Activated CD8-positive, alpha-beta memory T cell treated with anti-CD3 and anti-CD28 coated beads, Interleukin-2, amount 10 ng/mL, durations not matched to agents 7 days and 5 days (primary cell): ENCODE measurements at regions of chr17 and their contacts with region 1.

Region 1: GRCh38 chr17:1365445-1366039 is 34.5 kb downstream of the YWHAE start:
- DNase-seq: peak; percentile 71
- ATAC-seq: peak; percentile 56
- H3K4me3 Mint-ChIP-seq: no peak overlapping the region
- H3K27ac Mint-ChIP-seq: no peak overlapping the region
- H3K4me1 Mint-ChIP-seq: peaks cover 68% of the 10 kb centered on the region
- H3K27me3 Mint-ChIP-seq: no peaks in the 10 kb centered on the region

Region 2: DNA sequence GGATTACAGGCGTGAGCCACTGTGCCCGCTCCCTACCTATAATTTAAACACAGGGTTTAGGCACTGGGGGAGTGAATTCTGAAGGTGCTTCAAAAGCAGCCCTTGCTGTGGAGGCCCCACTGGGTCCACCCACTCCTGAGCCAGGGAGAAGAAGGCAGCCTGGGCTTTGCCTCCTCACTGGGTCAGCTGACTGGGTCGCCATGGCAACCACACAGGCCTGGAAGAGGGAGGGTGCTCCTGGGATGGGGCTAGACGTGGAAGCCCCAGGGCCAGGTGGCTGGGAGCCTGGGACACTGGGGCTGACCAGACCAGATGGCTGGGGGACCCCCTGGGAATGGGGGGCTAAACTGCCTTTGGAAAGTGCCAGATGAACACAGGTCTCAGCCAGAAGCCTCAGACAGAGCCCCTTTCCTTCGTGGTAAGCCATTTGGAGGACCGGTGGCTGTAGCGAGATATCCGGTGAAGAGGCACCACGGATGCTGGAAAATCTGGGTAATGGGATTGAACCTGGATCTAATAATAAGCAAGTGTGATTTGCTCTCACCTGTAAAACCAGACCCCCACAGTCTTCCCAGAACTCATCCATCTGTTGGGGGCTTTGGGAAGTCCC is 53.2 kb before region 1 on chr17:
- CTCF ChIA-PET with region 1: no interaction called
- DNase-seq: no peak
- ATAC-seq: peak; percentile 45
- H3K4me3 Mint-ChIP-seq: no peak overlapping the region
- H3K27ac Mint-ChIP-seq: no peak overlapping the region
- H3K4me1 Mint-ChIP-seq: no peaks in the 10 kb centered on the region
- H3K27me3 Mint-ChIP-seq: peaks cover 17% of the 10 kb centered on the region

Region 3: DNA sequence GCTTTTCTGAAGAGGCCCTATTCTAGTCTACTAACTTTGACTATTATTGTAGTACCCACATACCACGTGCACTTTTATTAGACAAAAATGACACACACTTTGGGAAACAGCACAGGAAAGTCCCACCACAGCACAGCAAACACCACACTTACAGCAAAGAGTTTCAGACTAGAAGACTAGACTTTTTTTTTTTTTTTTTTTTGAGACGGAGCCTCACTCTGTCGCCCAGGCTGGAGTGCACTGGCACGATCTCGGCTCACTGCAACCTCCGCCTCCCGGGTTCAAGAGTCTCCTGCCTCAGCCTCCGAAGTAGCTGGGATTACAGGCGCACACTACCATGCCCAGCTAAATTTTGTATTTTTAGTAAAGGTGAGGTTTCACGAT is 14.4 kb after region 1 on chr17:
- CTCF ChIA-PET with region 1: interaction called, 38 read pairs
- DNase-seq: peak; percentile 50
- ATAC-seq: peak; percentile 29
- H3K4me3 Mint-ChIP-seq: no peak overlapping the region
- H3K27ac Mint-ChIP-seq: peak overlapping the region; percentile 58
- H3K4me1 Mint-ChIP-seq: peaks cover 68% of the 10 kb centered on the region
- H3K27me3 Mint-ChIP-seq: no peaks in the 10 kb centered on the region

Region 4: GRCh38 chr17:1399679-1400512 is 34.4 kb after region 1 on chr17 and contains the start of gene YWHAE:
- CTCF ChIA-PET with region 1: interaction called, 18 read pairs
- DNase-seq: peak; percentile 98
- ATAC-seq: peak; percentile 95
- H3K4me3 Mint-ChIP-seq: peak within 1 kb of the TSS; percentile 95
- H3K27ac Mint-ChIP-seq: peak within 1 kb of the TSS; percentile 97
- H3K4me1 Mint-ChIP-seq: peaks cover 25% of the 10 kb centered on the region
- H3K27me3 Mint-ChIP-seq: no peaks in the 10 kb centered on the region
- total RNA-seq, gene YWHAE: 341 to 452 TPM

Region 5: DNA sequence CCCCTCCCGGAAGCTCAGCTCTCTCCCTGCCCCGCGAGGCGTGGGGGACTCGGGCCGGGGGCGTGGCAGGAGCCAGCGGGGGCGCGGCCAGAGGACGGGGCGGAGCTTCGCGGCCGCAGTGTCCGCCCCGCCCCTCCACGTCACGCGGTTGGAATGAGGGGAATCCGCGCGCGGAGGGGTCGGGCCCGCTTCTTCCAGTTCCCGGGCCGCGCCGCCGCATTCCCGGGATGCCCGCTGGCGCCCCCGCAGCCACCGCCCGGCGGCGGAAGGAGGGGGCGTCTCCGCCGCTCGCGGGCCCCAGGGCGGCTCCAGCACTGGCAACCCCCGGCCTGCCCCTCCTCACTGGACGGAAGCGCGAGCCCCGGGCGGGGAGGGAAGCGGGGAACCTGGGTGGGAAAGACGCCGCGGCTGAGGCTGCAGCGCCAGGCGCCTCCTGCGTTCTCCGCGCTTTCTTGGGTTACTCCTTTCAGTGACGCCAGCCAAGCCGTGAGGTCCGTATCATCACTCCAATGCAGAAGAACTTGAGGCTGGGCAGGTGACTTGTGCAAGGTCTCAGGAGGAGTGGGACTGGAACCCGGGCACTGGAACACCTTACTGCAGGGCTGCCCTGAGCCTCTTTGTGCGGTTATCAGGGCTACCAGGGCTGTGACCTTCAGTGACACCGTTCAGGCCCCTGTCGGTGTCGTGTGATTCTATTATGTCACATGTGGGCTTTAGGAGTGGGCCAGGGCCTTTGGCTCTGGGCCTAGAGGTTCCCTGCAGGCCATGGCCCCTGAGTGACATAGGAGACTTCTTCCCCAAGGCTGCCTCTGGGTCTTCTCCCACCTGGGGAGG is 122.7 kb after region 1 on chr17:
- CTCF ChIA-PET with region 1: interaction called, 21 read pairs
- DNase-seq: peak; percentile 76
- ATAC-seq: peak; percentile 36
- H3K4me3 Mint-ChIP-seq: peak overlapping the region; percentile 74
- H3K27ac Mint-ChIP-seq: peak overlapping the region; percentile 87
- H3K4me1 Mint-ChIP-seq: peaks cover 30% of the 10 kb centered on the region
- H3K27me3 Mint-ChIP-seq: peaks cover 4% of the 10 kb centered on the region

Region 6: DNA sequence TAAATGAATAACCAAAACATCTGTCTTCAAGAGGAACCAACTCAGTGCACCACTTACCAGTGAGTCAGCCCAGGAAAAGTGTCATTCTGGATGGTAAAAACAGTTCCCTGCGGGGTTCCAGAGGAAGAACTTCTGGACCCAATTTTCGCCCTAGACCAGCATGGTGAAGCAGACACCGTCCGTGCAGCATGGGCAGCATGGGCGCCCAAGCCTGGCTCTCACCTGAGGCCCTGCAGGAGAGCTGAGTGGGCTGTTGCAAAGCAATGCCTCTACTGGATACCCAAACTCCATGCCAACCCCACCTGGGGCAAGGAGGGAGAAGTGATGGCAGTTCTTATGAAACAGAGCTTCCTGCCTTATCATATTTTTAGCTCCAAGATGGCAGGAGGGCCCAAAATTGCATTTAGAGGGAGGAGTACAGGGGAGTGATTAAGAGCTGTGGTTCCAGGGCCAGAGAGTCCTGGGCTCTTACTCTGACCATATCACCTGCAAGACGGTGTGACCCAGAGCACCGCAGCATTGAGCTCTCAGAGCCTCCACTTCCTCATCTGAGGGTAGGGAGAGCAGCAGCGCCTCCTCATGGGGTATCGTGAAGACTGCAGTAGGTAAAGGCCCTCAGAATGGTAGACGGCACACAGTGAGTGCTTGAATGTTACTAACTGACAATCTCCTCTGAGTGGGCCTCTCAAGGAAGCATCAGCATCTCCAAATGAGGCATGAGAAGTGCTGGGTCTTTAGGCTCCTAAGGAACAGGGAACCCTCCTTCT is 167.5 kb after region 1 on chr17:
- CTCF ChIA-PET with region 1: interaction called, 13 read pairs
- DNase-seq: peak; percentile 56
- ATAC-seq: peak; percentile 68
- H3K4me3 Mint-ChIP-seq: no peak overlapping the region
- H3K27ac Mint-ChIP-seq: no peak overlapping the region
- H3K4me1 Mint-ChIP-seq: no peaks in the 10 kb centered on the region
- H3K27me3 Mint-ChIP-seq: no peaks in the 10 kb centered on the region